Naive thymus-derived CD4-positive, alpha-beta T cell (primary cell): ENCODE measurements at regions of chr1 and their contacts with region 1.

Region 1: DNA sequence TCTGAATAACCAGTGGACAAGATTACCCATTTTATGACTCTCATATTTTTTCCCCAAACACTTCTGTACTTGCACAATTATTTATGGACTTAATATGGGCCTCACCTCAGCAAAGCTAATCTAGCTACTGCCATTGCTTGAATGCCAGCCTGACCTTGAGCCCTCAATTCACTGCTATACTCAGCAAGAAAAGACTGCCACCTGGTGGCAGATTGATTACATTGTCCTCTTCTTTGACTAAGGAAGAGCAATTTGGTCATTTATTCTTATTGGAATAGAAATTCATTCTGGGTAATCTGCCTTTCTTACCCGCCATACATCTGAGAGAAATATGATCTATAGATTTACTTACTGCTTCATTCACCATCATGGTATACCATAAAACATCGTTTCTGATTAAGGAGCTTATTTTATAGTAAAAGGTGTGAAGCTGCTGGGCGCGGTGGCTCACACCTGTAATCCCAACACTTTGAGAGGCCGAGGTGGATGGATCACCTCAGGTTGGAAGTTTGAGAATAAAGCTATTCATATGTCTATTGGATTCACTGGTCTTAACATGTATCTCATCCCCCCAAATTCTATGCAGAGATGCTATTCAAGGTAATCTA is 32.9 kb upstream of the DIPK1A start:
- DNase-seq: peak; percentile 10 to 85 (median 76)
- ATAC-seq: peak; percentile 94
- H3K4me3 ChIP-seq: no peak overlapping the region
- H3K4me3 Mint-ChIP-seq: peak overlapping the region in 2 of 10 donors; percentile 23 to 30
- H3K27ac ChIP-seq: no peak overlapping the region
- H3K27ac Mint-ChIP-seq: peak overlapping the region in 8 of 9 donors; percentile 6 to 87 (median 62)
- H3K4me1 ChIP-seq: peaks cover 36 to 38% of the 10 kb centered on the region in 2 donors
- H3K4me1 Mint-ChIP-seq: peaks cover 21 to 50% (median 47%) of the 10 kb centered on the region in 7 donors
- H3K27me3 ChIP-seq: no peaks in the 10 kb centered on the region
- H3K27me3 Mint-ChIP-seq: peaks cover 0 to 3% (median 0%) of the 10 kb centered on the region in 5 donors

Region 2: DNA sequence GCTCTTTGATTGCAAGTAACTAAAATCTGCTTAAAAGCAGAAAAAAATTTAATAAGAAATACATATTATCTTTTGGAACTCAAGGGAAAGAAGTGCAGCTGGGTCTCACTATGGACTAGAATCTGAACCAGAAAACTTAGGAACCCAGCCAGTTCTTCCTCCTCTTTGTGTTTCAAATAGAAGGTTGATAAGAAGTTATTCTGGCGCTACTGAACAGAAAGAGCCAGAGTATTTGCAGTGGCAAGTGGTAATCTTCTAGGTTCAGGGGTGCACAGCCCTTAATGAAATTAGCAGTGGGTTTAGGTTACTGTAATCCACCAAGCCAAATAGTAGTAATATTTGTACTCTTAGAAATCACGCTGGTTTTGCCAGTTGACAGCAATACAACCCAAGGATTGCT is 885.6 kb before region 1 on chr1:
- CTCF ChIA-PET with region 1: no interaction called
- POLR2A ChIA-PET with region 1: no interaction called
- intact Hi-C with region 1: no loop called
- DNase-seq: no peak
- ATAC-seq: no peak
- H3K4me3 ChIP-seq: no peak overlapping the region
- H3K4me3 Mint-ChIP-seq: no peak overlapping the region
- H3K27ac ChIP-seq: no peak overlapping the region
- H3K27ac Mint-ChIP-seq: no peak overlapping the region
- H3K4me1 ChIP-seq: no peaks in the 10 kb centered on the region
- H3K4me1 Mint-ChIP-seq: no peaks in the 10 kb centered on the region
- H3K27me3 ChIP-seq: no peaks in the 10 kb centered on the region
- H3K27me3 Mint-ChIP-seq: no peaks in the 10 kb centered on the region

Region 3: DNA sequence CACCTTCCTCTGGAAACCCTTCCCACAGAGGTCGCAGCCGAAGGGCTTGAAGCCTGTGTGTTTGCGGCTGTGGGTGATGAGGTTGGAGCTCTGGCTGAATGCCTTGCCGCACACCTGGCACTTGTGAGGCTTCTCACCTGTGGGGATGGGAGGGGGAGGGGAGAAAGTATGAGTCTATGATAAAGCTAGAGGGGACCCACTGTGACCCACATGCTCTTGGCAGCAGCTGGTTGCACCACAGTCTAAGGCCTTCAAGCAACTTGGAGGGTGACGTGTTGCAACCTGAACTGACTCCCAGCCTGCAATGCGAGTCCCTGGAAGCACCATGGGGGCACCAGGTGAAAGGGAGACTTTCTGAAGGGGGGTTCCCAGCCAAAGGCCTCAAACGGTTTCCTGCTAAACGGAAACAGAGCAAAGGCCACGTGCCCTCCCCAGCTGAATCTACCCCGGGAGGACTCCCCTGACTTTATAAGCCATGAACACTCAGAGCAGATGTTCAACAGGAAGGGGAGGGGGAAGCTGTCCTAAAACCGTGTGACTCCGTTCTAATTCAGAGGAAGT is 518.1 kb before region 1 on chr1:
- CTCF ChIA-PET with region 1: no interaction called
- POLR2A ChIA-PET with region 1: no interaction called
- intact Hi-C with region 1: no loop called
- DNase-seq: peak in 8 of 9 donors; percentile 45 to 82 (median 58)
- ATAC-seq: peak; percentile 85
- H3K4me3 ChIP-seq: no peak overlapping the region
- H3K4me3 Mint-ChIP-seq: peak overlapping the region; percentile 2 to 78 (median 72)
- H3K27ac ChIP-seq: peak overlapping the region; percentile 68
- H3K27ac Mint-ChIP-seq: peak overlapping the region; percentile 76 to 92 (median 86)
- H3K4me1 ChIP-seq: peaks cover 19 to 59% of the 10 kb centered on the region in 2 donors
- H3K4me1 Mint-ChIP-seq: peaks cover 24 to 86% (median 64%) of the 10 kb centered on the region in 7 donors
- H3K27me3 ChIP-seq: no peaks in the 10 kb centered on the region
- H3K27me3 Mint-ChIP-seq: no peaks in the 10 kb centered on the region

Region 4: GRCh38 chr1:92831762-92832536 is 162.3 kb before region 1 on chr1 and contains the start of gene RPL5:
- CTCF ChIA-PET with region 1: interaction called, 12 read pairs
- POLR2A ChIA-PET with region 1: interaction called, 5 read pairs
- intact Hi-C with region 1: loop called in 1 of 2 experiments (anchors 1 kb)
- DNase-seq: peak; percentile 94 to 99 (median 98)
- ATAC-seq: peak; percentile 95
- H3K4me3 ChIP-seq: peak within 1 kb of the TSS; percentile 94
- H3K4me3 Mint-ChIP-seq: peak within 1 kb of the TSS; percentile 94 to 100 (median 98)
- H3K27ac ChIP-seq: peak within 1 kb of the TSS; percentile 94
- H3K27ac Mint-ChIP-seq: peak within 1 kb of the TSS; percentile 98 to 100 (median 99)
- H3K4me1 ChIP-seq: peaks cover 16 to 30% of the 10 kb centered on the region in 2 donors
- H3K4me1 Mint-ChIP-seq: peaks cover 29 to 54% (median 44%) of the 10 kb centered on the region in 7 donors
- H3K27me3 ChIP-seq: no peaks in the 10 kb centered on the region
- H3K27me3 Mint-ChIP-seq: peaks cover 0 to 5% (median 0%) of the 10 kb centered on the region in 5 donors
- total RNA-seq, gene RPL5: 764 to 1,693 (median 1,596) TPM

Region 5: DNA sequence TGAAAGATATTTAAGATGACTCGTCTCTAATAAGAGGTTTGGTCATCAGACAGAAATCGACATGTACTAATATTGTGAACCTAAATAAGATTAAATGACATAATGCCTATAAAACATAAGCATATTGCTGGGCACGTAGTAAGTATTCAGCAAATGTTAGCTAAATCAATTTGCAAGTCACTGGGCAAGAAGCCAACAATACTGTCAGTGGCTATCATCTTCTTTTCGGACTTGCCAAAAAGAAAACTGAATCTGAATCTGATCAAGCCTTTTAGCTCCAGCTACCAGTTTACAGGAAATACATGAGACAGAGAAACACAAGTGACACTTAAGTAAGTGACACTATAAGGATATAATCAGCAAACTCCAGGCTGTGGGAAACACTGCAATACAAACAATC is 116.4 kb before region 1 on chr1:
- CTCF ChIA-PET with region 1: interaction called, 13 read pairs
- POLR2A ChIA-PET with region 1: interaction called, 4 read pairs
- intact Hi-C with region 1: no loop called
- DNase-seq: peak in 1 of 9 donors; percentile 16
- ATAC-seq: no peak
- H3K4me3 ChIP-seq: peak overlapping the region; percentile 15
- H3K4me3 Mint-ChIP-seq: peak overlapping the region in 8 of 10 donors; percentile 58 to 75 (median 68)
- H3K27ac ChIP-seq: peak overlapping the region; percentile 53
- H3K27ac Mint-ChIP-seq: peak overlapping the region; percentile 51 to 94 (median 84)
- H3K4me1 ChIP-seq: peaks cover 18 to 22% of the 10 kb centered on the region in 2 donors
- H3K4me1 Mint-ChIP-seq: peaks cover 24 to 47% (median 42%) of the 10 kb centered on the region in 7 donors
- H3K27me3 ChIP-seq: no peaks in the 10 kb centered on the region
- H3K27me3 Mint-ChIP-seq: no peaks in the 10 kb centered on the region

Region 6: GRCh38 chr1:92901699-92902405 is 92.4 kb before region 1 on chr1:
- CTCF ChIA-PET with region 1: no interaction called
- POLR2A ChIA-PET with region 1: no interaction called
- intact Hi-C with region 1: no loop called
- DNase-seq: no peak
- ATAC-seq: no peak
- H3K4me3 ChIP-seq: no peak overlapping the region
- H3K4me3 Mint-ChIP-seq: no peak overlapping the region
- H3K27ac ChIP-seq: no peak overlapping the region
- H3K27ac Mint-ChIP-seq: peak overlapping the region in 2 of 9 donors; percentile 28 to 65
- H3K4me1 ChIP-seq: no peaks in the 10 kb centered on the region
- H3K4me1 Mint-ChIP-seq: peaks cover 13 to 38% (median 32%) of the 10 kb centered on the region in 7 donors
- H3K27me3 ChIP-seq: no peaks in the 10 kb centered on the region
- H3K27me3 Mint-ChIP-seq: no peaks in the 10 kb centered on the region

Region 7: DNA sequence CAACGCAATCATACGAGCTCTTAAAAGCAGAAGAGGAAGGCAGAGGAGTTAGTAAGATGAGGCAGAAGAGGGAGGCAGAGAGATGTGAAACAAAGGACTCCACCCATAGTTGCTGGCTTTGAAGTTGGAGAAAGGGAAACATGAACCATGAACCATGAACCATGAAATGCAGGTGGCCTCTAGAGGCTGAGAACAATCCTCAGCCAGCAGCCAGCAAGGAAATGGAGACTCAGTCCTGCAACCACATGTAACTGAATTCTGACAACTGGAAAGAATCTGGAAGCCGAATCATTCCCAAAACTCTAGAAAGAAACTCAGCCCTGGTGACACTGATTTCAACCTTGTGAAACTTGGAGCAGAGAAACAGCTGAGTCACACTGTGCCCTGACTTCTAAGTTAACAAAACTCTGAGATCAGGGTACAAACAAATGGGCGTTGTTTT is 43.0 kb before region 1 on chr1:
- CTCF ChIA-PET with region 1: interaction called, 36 read pairs
- POLR2A ChIA-PET with region 1: interaction called, 4 read pairs
- intact Hi-C with region 1: loop called (anchors 1 to 5 kb)
- DNase-seq: peak in 7 of 9 donors; percentile 25 to 57 (median 40)
- ATAC-seq: peak; percentile 91
- H3K4me3 ChIP-seq: no peak overlapping the region
- H3K4me3 Mint-ChIP-seq: no peak overlapping the region
- H3K27ac ChIP-seq: no peak overlapping the region
- H3K27ac Mint-ChIP-seq: no peak overlapping the region
- H3K4me1 ChIP-seq: peaks cover 21 to 39% of the 10 kb centered on the region in 2 donors
- H3K4me1 Mint-ChIP-seq: peaks cover 34 to 53% (median 46%) of the 10 kb centered on the region in 7 donors
- H3K27me3 ChIP-seq: no peaks in the 10 kb centered on the region
- H3K27me3 Mint-ChIP-seq: no peaks in the 10 kb centered on the region

Region 8: DNA sequence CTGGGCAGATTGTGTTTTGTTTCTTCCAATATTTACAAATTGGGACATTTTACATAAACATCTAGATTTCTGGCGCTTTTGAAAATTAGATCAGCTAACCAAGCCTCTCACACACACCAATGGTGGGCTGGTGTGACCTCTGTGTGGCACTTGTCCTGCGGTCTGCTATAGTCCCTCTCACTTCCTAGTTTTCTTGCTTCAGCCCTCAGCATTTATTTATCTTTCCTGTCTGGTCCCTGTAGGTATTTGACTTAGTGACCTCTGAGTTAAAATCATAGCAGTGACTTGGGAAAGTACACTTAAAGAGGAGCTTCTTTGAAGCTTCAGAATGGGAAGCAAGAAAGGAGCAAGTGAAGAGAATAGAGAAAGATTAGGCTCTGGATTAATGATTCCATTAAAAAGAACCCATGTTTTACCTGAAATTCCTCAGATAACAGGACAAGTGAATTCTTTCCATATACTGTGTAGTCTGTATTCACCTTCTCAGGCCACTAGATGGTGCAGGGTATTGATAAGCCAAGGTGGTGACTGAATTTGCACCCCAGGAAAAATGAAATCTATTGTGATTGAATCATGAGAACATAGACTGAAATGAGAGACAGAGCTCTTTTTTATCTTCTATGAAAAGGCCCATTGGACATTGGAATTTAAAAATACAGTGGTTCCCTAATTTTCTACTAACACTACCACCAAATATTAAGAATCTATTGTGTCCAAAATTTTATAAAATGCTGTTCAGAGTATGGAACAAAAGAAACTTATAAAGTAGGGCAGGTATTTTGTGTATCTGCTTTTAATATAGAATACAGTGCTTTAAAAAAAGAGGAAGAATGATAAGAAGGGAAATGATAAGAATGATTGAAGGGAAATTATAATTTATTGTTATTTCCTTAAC is 25.8 kb before region 1 on chr1:
- CTCF ChIA-PET with region 1: interaction called, 175 read pairs
- POLR2A ChIA-PET with region 1: interaction called, 70 read pairs
- intact Hi-C with region 1: loop called (anchors 1 kb)
- DNase-seq: peak in 7 of 9 donors; percentile 22 to 60 (median 41)
- ATAC-seq: peak; percentile 72
- H3K4me3 ChIP-seq: no peak overlapping the region
- H3K4me3 Mint-ChIP-seq: no peak overlapping the region
- H3K27ac ChIP-seq: no peak overlapping the region
- H3K27ac Mint-ChIP-seq: peak overlapping the region in 7 of 9 donors; percentile 6 to 69 (median 44)
- H3K4me1 ChIP-seq: peaks cover 29 to 45% of the 10 kb centered on the region in 2 donors
- H3K4me1 Mint-ChIP-seq: peaks cover 22 to 33% (median 31%) of the 10 kb centered on the region in 7 donors
- H3K27me3 ChIP-seq: no peaks in the 10 kb centered on the region
- H3K27me3 Mint-ChIP-seq: no peaks in the 10 kb centered on the region

Region 9: DNA sequence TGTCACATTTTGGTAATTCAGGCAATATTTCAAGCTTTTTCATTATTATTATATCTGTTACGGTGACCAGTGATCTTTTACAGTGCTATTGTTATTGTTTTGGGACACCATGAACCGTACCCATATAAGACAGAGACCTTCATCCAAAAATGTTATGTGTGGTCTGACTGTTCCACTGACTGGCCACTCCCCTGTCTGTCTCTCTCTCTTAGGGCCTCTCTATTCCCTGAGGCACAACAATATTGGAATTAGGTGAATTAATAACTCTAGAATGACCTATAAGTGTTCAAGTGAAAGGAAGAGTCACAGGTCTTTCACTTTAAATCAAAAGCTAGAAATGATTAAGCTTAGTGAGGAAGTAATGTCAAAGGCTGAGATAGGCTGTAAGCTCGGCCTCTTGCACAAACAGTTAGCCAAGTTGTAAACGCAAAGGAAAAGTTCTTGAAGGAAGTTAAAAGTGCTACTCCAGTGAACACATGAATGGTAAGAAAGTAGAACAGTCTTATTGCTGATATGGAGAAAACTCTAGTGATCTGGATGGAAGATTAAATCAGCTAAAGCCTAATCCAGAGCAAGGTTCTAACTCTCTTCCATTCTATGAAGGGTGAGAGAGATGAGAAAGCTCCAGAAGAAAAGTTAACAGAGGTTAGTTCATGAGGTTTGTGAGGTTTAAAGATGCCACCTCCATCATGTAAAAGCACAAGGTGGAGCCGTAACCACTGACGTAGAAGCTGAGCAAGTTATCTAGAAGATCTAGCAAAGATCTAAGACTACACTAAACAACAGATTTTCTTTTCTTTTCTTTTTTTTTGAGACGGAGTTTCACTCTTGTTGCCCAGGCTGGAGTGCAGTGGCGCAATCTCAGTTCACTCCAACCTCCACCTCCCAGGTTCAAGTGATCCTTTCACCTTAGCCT is 13.2 kb before region 1 on chr1:
- CTCF ChIA-PET with region 1: interaction called, 174 read pairs
- POLR2A ChIA-PET with region 1: interaction called, 20 read pairs
- intact Hi-C with region 1: loop called (anchors 1 kb)
- DNase-seq: peak in 7 of 9 donors; percentile 69 to 91 (median 86)
- ATAC-seq: peak; percentile 98
- H3K4me3 ChIP-seq: peak overlapping the region; percentile 24
- H3K4me3 Mint-ChIP-seq: peak overlapping the region; percentile 5 to 83 (median 67)
- H3K27ac ChIP-seq: peak overlapping the region; percentile 81
- H3K27ac Mint-ChIP-seq: peak overlapping the region; percentile 93 to 99 (median 98)
- H3K4me1 ChIP-seq: peaks cover 19 to 33% of the 10 kb centered on the region in 2 donors
- H3K4me1 Mint-ChIP-seq: peaks cover 13 to 62% (median 26%) of the 10 kb centered on the region in 7 donors
- H3K27me3 ChIP-seq: no peaks in the 10 kb centered on the region
- H3K27me3 Mint-ChIP-seq: no peaks in the 10 kb centered on the region

Region 10: GRCh38 chr1:93061895-93062792 is 67.9 kb after region 1 on chr1:
- CTCF ChIA-PET with region 1: interaction called, 5 read pairs
- POLR2A ChIA-PET with region 1: no interaction called
- intact Hi-C with region 1: loop called in 1 of 2 experiments (anchors 1 kb)
- DNase-seq: peak in 7 of 9 donors; percentile 14 to 54 (median 49)
- ATAC-seq: peak; percentile 80
- H3K4me3 ChIP-seq: no peak overlapping the region
- H3K4me3 Mint-ChIP-seq: no peak overlapping the region
- H3K27ac ChIP-seq: no peak overlapping the region
- H3K27ac Mint-ChIP-seq: peak overlapping the region in 1 of 9 donors; percentile 23
- H3K4me1 ChIP-seq: no peaks in the 10 kb centered on the region
- H3K4me1 Mint-ChIP-seq: peaks cover 0 to 6% (median 3%) of the 10 kb centered on the region in 7 donors
- H3K27me3 ChIP-seq: peaks cover 0 to 1% of the 10 kb centered on the region in 2 donors
- H3K27me3 Mint-ChIP-seq: peaks cover 5 to 53% (median 16%) of the 10 kb centered on the region in 5 donors

Region 11: GRCh38 chr1:93171549-93172034 is 177.4 kb after region 1 on chr1:
- CTCF ChIA-PET with region 1: no interaction called
- POLR2A ChIA-PET with region 1: no interaction called
- intact Hi-C with region 1: no loop called
- DNase-seq: no peak
- ATAC-seq: no peak
- H3K4me3 ChIP-seq: peak overlapping the region; percentile 0
- H3K4me3 Mint-ChIP-seq: peak overlapping the region; percentile 59 to 95 (median 86)
- H3K27ac ChIP-seq: no peak overlapping the region
- H3K27ac Mint-ChIP-seq: peak overlapping the region in 8 of 9 donors; percentile 0 to 85 (median 54)
- H3K4me1 ChIP-seq: peaks cover 17 to 39% of the 10 kb centered on the region in 2 donors
- H3K4me1 Mint-ChIP-seq: peaks cover 54 to 80% (median 68%) of the 10 kb centered on the region in 7 donors
- H3K27me3 ChIP-seq: no peaks in the 10 kb centered on the region
- H3K27me3 Mint-ChIP-seq: no peaks in the 10 kb centered on the region